Breast epithelium (tissue), 4 donors: ENCODE measurements at regions of chr7 and their contacts with region 1.

Region 1: DNA sequence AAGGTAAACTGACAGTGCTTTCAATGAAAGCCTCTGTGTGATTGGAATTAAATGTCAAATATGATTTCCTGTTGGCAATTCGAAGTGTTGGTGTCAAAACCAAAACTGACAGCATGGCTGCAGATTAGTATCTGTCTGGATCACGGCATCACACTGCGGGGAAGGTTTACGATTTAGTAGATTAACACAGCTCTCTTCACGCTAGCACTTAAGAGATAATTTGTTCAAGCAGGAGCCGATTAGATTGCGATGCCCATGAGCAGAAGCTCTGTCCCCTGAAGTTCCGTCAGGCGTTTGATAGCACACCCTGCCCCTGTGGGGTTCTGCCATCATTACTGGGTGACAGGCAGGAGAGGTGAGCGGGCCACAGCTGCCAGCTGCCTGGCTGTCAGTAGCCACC is 279.5 kb upstream of the AUTS2 start:
- DNase-seq: no peak
- H3K4me3 ChIP-seq: no peak overlapping the region
- H3K27ac ChIP-seq: no peak overlapping the region
- H3K4me1 ChIP-seq: no peaks in the 10 kb centered on the region
- H3K27me3 ChIP-seq: no peaks in the 10 kb centered on the region
- CTCF ChIP-seq: no peak
- POLR2A ChIP-seq: no peak

Region 2: DNA sequence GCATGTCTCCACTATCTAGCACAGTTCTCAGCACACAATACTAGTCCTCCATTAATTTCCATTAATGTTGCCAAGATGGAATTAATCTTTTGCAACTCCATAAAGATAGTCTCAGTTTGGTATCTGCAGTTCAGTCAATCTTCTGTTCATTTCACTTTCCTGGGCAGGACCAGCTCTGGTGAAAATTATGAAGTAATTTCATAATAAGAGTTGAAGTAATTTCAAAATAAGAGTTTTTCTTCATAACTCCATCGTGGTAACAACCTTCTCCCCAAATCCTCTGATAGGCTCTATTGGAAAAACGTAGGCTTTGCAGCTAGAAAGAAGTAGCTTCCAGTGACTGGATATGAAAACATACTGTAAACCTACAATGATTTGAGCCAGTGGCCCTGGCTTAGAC is 1704.0 kb before region 1 on chr7:
- intact Hi-C with region 1: loop called (anchors 5 kb)
- DNase-seq: no peak
- H3K4me3 ChIP-seq: no peak overlapping the region
- H3K27ac ChIP-seq: no peak overlapping the region
- H3K4me1 ChIP-seq: no peaks in the 10 kb centered on the region
- H3K27me3 ChIP-seq: no peaks in the 10 kb centered on the region
- CTCF ChIP-seq: no peak
- POLR2A ChIP-seq: no peak

Region 3: GRCh38 chr7:69334676-69335075 is 15.9 kb after region 1 on chr7:
- intact Hi-C with region 1: no loop called
- DNase-seq: no peak
- H3K4me3 ChIP-seq: no peak overlapping the region
- H3K27ac ChIP-seq: no peak overlapping the region
- H3K4me1 ChIP-seq: no peaks in the 10 kb centered on the region
- H3K27me3 ChIP-seq: no peaks in the 10 kb centered on the region
- CTCF ChIP-seq: no peak
- POLR2A ChIP-seq: no peak